Colonic mucosa (tissue), 4 donors: ENCODE measurements at regions of chr3 and their contacts with region 1.

Region 1: DNA sequence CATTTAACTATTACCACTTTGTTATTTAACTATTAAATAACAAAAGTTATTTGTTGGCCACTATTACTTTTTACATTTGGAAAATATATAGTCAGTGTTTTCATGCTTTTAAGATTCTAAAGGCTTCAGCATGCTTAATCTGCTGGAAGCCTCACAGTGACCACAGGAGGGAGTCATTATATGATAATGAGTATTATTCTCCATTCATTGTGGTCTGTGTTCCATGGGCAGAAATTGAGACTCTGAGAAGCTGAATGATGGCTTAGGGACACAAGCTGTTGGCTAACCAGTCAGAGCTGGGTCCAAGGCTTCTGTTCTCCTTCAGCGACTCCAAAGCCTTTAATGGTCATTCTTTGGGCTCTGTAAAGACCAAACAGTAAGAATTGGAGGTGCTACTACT is 64.7 kb downstream of the BFSP2 start:
- DNase-seq: no peak
- H3K4me3 ChIP-seq: no peak overlapping the region
- H3K27ac ChIP-seq: no peak overlapping the region
- H3K4me1 ChIP-seq: peaks cover 4% of the 10 kb centered on the region
- H3K27me3 ChIP-seq: no peaks in the 10 kb centered on the region
- CTCF ChIP-seq: no peak

Region 2: DNA sequence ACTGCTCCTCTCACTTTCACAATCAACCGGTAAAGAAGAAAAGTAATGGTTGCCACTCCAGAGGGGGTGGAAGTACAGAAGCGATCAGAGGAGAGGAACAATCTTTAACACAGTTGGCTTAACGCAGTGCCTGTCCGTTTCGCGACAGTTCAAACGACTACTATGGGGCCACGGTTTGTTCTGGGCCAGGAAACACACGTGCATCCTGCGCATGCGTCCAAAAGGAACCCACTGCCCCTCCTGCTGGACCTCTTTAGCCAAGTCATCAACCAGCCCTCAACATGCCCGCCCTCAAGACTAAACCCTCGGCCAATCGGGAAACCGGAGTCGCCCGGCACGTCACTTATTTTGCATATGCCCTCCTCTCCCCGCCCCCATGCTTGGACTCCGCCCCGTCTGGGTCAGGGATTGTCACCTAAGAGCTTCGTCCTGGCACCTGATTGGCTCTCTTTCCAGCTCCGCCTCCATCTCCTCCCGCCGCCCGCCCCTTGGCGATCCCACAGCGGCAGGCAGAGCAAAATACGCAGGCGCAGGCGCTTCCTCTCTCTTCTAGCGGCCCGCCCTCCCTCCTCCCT is 108.6 kb after region 1 on chr3:
- intact Hi-C with region 1: loop called (anchors 10 kb)
- DNase-seq: peak; percentile 100
- H3K4me3 ChIP-seq: peak overlapping the region; percentile 57
- H3K27ac ChIP-seq: peak overlapping the region; percentile 92
- H3K4me1 ChIP-seq: peaks cover 8% of the 10 kb centered on the region
- H3K27me3 ChIP-seq: no peaks in the 10 kb centered on the region
- CTCF ChIP-seq: no peak

Region 3: DNA sequence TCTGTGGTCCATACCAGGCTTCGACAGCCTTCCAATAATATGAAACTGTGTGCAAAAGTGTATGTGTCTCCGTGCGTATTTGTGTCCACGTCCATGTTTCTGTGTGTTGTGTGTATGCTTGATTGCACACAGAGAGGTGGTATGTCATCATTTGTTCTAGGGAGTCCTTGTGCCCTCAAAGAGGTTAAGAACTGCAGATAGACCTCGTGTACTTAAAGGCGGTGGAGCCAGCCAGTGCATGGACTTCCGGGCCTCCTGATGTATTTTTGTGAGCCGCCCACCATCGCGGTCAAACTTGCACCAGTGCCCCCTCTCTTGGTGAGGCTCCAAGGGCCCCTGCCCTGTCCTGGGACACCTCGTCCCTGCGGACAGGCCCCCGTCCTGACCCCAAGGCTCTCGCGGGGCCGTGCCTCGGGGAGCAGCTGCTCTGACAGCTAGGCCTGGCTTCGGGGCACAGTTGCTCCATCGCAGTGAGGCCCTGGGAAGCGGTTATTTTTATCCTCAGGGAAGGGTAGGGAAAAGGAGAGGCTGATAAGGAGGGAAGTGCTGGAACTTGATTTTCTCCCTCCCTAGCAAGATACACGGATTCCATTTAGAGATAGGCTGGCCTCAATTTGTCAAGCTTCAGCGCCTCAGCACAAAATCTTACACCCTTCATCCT is 787.3 kb after region 1 on chr3:
- intact Hi-C with region 1: no loop called
- DNase-seq: no peak
- H3K4me3 ChIP-seq: no peak overlapping the region
- H3K27ac ChIP-seq: no peak overlapping the region
- H3K4me1 ChIP-seq: no peaks in the 10 kb centered on the region
- H3K27me3 ChIP-seq: no peaks in the 10 kb centered on the region
- CTCF ChIP-seq: no peak